ENCODE measurements at regions of chr16 and their contacts with region 1.

Region 1: GRCh38 chr16:67028555-67029248 is at the start of gene CBFB:
- DNase-seq: peak; percentile 94
- ATAC-seq: peak; percentile 86
- H3K4me3 Mint-ChIP-seq: peak within 1 kb of the TSS; percentile 93
- H3K27ac Mint-ChIP-seq: peak within 1 kb of the TSS; percentile 96
- H3K4me1 Mint-ChIP-seq: peaks cover 40% of the 10 kb centered on the region
- H3K27me3 Mint-ChIP-seq: no peaks in the 10 kb centered on the region
- CTCF ChIP-seq: no peak
- total RNA-seq, gene CBFB: 66.6 and 67.3 TPM in 2 replicates

Region 2: DNA sequence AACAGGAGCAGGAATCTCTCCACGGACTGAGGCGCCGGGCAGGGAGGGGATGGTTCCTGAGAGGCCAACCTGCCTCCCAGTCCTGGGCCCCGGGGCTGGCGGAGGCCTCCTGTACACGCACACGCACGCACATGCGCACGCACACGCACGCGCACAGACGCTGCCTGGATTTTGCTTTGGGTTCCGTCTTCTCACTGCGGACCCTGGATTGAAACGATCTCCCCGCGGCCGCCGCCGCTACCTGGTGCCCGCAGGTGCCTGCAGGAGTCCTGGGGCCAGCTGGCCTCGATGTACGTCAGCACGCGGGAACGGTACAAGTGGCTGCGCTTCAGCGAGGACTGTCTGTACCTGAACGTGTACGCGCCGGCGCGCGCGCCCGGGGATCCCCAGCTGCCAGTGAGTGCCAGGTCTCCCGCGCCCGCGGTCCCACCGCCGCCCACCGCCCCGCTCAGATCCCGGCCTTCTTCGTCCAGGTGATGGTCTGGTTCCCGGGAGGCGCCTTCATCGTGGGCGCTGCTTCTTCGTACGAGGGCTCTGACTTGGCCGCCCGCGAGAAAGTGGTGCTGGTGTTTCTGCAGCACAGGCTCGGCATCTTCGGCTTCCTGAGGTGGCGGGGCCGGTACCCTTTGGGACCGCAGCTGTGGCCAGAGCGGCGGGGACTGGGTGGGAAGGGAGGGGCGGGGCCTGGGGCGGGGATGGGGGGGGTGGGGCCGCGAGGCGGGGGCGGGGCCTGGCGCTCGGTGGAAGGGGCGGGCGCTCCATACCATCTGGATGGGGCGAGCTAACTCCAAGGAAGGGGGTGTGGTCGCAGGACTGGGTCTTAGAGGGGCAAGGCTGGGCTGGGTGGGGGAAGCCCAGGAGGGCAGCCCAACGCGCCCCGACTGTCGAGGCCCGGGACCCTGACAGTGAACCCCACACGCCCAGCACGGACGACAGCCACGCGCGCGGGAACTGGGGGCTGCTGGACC is 28.0 kb before region 1 on chr16:
- CTCF ChIA-PET with region 1: no interaction called
- POLR2A ChIA-PET with region 1: no interaction called
- intact Hi-C with region 1: loop called (anchors 2 kb)
- DNase-seq: peak; percentile 54
- ATAC-seq: peak; percentile 71
- H3K4me3 Mint-ChIP-seq: peak overlapping the region; percentile 84
- H3K27ac Mint-ChIP-seq: no peak overlapping the region
- H3K4me1 Mint-ChIP-seq: peaks cover 14% of the 10 kb centered on the region
- H3K27me3 Mint-ChIP-seq: no peaks in the 10 kb centered on the region
- CTCF ChIP-seq: no peak

Region 3: DNA sequence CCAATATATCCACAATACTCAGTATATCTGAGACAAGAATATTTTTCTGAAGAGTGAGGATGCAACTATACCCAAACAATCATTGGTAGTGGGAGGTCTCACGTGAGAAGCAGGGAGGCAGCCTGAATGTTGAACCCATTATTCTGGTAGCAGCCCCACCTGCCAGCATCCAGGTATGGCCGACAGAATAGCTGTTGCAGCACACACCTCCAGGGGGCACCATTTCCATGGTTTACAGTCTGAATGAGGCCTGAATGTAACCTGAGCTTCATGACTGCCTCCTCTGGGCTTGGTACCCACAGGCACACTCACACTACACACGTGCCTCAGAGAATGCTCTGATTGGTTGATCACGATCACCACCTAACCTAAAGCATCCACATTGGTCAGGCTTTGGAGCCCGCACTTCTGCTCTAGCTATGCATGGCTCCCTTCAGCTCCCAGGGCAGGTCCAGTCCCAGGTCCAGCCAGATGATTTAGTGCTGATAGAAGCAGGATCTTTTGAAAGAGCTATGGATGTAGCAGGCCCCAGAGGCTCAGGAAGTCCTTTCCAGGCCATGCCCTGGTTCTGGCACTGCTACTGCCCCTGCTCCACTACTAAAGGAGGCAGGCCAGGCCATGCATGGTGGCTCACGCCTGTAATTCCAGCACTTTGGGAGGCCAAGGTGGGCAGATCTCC is 10.8 kb before region 1 on chr16:
- CTCF ChIA-PET with region 1: interaction called, 4 read pairs
- POLR2A ChIA-PET with region 1: interaction called, 14 read pairs
- intact Hi-C with region 1: loop called (anchors 1 kb)
- DNase-seq: peak; percentile 41
- ATAC-seq: peak; percentile 80
- H3K4me3 Mint-ChIP-seq: no peak overlapping the region
- H3K27ac Mint-ChIP-seq: no peak overlapping the region
- H3K4me1 Mint-ChIP-seq: peaks cover 4% of the 10 kb centered on the region
- H3K27me3 Mint-ChIP-seq: no peaks in the 10 kb centered on the region
- CTCF ChIP-seq: no peak

Region 4: DNA sequence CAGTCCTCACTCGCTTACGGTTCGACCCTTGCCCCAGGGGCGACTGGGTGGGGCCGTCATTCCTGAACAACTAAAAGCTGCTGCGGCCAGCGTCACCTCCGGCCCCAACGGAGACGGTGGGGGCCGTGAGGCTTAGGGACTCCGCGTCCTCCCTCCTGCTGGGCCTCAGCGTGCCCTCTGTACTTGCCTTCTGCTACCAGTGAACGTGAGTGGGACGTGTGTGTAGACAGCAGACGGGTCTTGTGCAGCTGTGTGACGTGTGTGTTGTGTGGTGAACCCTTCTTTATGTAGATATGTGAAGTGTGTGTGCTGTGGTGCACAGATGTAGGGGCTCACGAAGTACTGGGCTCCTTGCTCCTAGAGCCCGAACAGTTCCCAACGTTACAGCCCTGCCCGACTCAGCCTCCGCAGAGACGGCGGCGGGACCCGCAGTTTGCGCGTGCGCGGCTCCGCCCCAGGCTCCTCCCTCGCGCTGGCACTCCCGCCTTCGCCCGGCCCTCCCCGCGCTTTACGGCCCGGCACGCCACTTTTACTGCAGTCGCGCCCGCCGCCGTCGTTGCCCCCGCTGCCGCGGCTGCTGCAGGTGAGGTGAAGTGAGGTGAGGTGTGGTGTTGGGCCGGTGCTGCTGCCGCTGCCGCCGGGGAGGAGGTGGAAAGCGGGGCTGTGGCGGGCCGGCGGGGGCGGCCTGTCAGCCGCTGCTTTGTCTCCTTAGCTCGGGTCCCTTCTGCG is 80.9 kb after region 1 on chr16 and contains the start of gene PHAF1:
- CTCF ChIA-PET with region 1: no interaction called
- POLR2A ChIA-PET with region 1: interaction called, 8 read pairs
- intact Hi-C with region 1: loop called (anchors 1 kb)
- DNase-seq: peak; percentile 96
- ATAC-seq: peak; percentile 92
- H3K4me3 Mint-ChIP-seq: peak within 1 kb of the TSS; percentile 91
- H3K27ac Mint-ChIP-seq: peak within 1 kb of the TSS; percentile 83
- H3K4me1 Mint-ChIP-seq: peaks cover 39% of the 10 kb centered on the region
- H3K27me3 Mint-ChIP-seq: no peaks in the 10 kb centered on the region
- CTCF ChIP-seq: no peak
- total RNA-seq, gene PHAF1: 13.8 and 16.9 TPM in 2 replicates

Region 5: DNA sequence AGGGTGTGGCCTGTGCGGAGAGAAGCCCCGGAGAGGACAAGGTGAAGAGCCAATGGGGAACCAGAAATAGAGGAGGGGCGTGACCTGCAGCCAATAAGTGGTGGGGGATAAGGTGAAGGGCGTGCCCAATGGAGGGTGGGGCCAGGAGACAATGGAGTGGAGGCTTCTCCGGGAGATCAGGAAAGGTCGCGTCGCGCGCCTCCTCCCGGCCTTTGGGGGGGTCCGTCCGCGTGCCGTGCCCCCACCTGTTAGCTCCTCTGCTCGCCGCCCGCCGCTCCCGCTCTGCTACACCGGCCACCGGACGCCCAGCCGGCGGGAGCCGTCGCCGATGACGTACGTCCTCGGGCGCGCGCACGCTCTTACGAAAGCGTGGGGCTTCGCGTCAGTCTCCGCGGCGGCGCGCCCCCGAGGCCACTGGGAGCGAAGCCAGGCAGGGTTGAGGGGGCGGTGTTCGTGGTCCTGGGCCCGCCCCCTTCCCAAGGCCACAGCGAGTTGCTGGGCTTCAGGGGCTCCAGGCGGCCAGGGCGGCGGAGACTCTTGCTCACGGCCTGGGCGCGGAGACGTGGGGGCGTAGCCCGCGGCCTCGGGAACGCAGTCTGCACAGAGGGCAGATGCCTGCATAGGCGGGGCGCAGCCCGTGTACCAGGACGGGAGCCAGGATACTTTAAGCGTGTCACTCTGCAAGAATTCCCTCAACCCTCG is 155.1 kb after region 1 on chr16 and contains the start of gene MATCAP1:
- CTCF ChIA-PET with region 1: no interaction called
- POLR2A ChIA-PET with region 1: interaction called, 5 read pairs
- intact Hi-C with region 1: loop called (anchors 1 kb)
- DNase-seq: peak; percentile 94
- ATAC-seq: peak; percentile 96
- H3K4me3 Mint-ChIP-seq: peak within 1 kb of the TSS; percentile 85
- H3K27ac Mint-ChIP-seq: no peak within 1 kb of the TSS
- H3K4me1 Mint-ChIP-seq: peaks cover 14% of the 10 kb centered on the region
- H3K27me3 Mint-ChIP-seq: peaks cover 12% of the 10 kb centered on the region
- CTCF ChIP-seq: no peak
- total RNA-seq, gene MATCAP1: 10.6 and 18.7 TPM in 2 replicates

Region 6: GRCh38 chr16:67226804-67227557 is 198.3 kb after region 1 on chr16 and contains the start of gene TMEM208:
- CTCF ChIA-PET with region 1: no interaction called
- POLR2A ChIA-PET with region 1: interaction called, 4 read pairs
- intact Hi-C with region 1: loop called (anchors 1 kb)
- DNase-seq: peak; percentile 98
- ATAC-seq: peak; percentile 98
- H3K4me3 Mint-ChIP-seq: peak within 1 kb of the TSS; percentile 100
- H3K27ac Mint-ChIP-seq: peak within 1 kb of the TSS; percentile 99
- H3K4me1 Mint-ChIP-seq: peaks cover 27% of the 10 kb centered on the region
- H3K27me3 Mint-ChIP-seq: no peaks in the 10 kb centered on the region
- CTCF ChIP-seq: no peak
- total RNA-seq, gene TMEM208: 37.1 and 41.3 TPM in 2 replicates

Region 7: DNA sequence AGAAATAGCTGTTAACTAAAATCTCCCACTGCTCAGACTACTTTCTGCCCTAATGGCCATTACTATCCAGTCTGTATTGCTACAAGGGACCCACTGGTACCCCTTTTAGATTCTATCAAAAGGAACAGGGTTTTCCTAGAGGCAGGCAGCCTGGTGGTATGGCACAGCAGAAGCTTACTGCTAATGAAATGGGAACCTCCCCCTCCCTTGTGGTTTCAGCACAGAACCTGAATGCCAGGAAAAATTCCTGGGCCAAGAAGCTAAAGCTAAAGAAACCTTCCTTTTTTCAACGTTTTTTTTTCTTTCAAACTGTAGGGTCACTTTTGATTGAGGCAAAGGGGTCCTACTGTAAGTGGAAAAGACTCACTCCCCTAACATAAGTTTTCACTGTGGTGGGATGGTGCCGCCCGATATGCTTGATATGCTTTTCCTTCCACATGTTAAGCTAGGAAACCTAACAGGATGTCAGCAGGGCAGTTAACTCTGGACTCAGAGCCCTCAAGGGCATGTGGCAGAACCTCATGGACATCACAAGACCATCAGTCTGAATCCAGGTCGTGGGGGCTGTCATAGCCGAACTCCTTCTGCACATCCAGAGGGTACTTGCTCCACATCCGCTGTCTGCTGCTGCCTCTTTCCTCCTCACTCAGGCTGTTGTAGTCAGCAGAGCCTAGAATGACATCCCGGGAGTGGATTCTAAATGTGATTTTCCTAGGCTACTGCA is 1272.2 kb after region 1 on chr16:
- CTCF ChIA-PET with region 1: no interaction called
- POLR2A ChIA-PET with region 1: interaction called, 10 read pairs
- intact Hi-C with region 1: no loop called
- DNase-seq: no peak
- ATAC-seq: no peak
- H3K4me3 Mint-ChIP-seq: no peak overlapping the region
- H3K27ac Mint-ChIP-seq: no peak overlapping the region
- H3K4me1 Mint-ChIP-seq: no peaks in the 10 kb centered on the region
- H3K27me3 Mint-ChIP-seq: no peaks in the 10 kb centered on the region
- CTCF ChIP-seq: no peak